CD4-positive, alpha-beta T cell (primary cell): ENCODE measurements at regions of chr1 and their contacts with region 1.

Region 1: GRCh38 chr1:99849744-99850458 is at the start of gene AGL:
- DNase-seq: peak; percentile 76 to 93 (median 83)
- ATAC-seq: peak; percentile 97
- H3K4me3 ChIP-seq: peak within 1 kb of the TSS; percentile 95
- H3K4me3 Mint-ChIP-seq: peak within 1 kb of the TSS; percentile 95
- H3K27ac ChIP-seq: peak within 1 kb of the TSS; percentile 64 to 65
- H3K27ac Mint-ChIP-seq: peak within 1 kb of the TSS; percentile 88
- H3K4me1 ChIP-seq: peaks cover 14% of the 10 kb centered on the region
- H3K4me1 Mint-ChIP-seq: peaks cover 42% of the 10 kb centered on the region
- H3K27me3 ChIP-seq: no peaks in the 10 kb centered on the region
- H3K27me3 Mint-ChIP-seq: no peaks in the 10 kb centered on the region
- CTCF ChIP-seq: no peak
- total RNA-seq, gene AGL: 8.6 to 9.6 TPM

Region 2: GRCh38 chr1:99969729-99970621 is 120.1 kb after region 1 on chr1 and contains the start of gene SLC35A3:
- CTCF ChIA-PET with region 1: no interaction called
- POLR2A ChIA-PET with region 1: interaction called, 4 read pairs
- intact Hi-C with region 1: loop called in 1 of 2 experiments (anchors 5 kb)
- DNase-seq: peak; percentile 60 to 88 (median 72)
- ATAC-seq: peak; percentile 83
- H3K4me3 ChIP-seq: peak within 1 kb of the TSS; percentile 80
- H3K4me3 Mint-ChIP-seq: peak within 1 kb of the TSS; percentile 100
- H3K27ac ChIP-seq: peak within 1 kb of the TSS; percentile 24 to 71
- H3K27ac Mint-ChIP-seq: peak within 1 kb of the TSS; percentile 97
- H3K4me1 ChIP-seq: peaks cover 11% of the 10 kb centered on the region
- H3K4me1 Mint-ChIP-seq: peaks cover 38% of the 10 kb centered on the region
- H3K27me3 ChIP-seq: no peaks in the 10 kb centered on the region
- H3K27me3 Mint-ChIP-seq: no peaks in the 10 kb centered on the region
- CTCF ChIP-seq: no peak
- total RNA-seq, gene SLC35A3: 20.2 to 24.6 TPM

Region 3: GRCh38 chr1:99980928-99981327 is 131.0 kb after region 1 on chr1:
- CTCF ChIA-PET with region 1: no interaction called
- POLR2A ChIA-PET with region 1: no interaction called
- intact Hi-C with region 1: no loop called
- DNase-seq: no peak
- ATAC-seq: no peak
- H3K4me3 ChIP-seq: no peak overlapping the region
- H3K4me3 Mint-ChIP-seq: no peak overlapping the region
- H3K27ac ChIP-seq: no peak overlapping the region
- H3K27ac Mint-ChIP-seq: no peak overlapping the region
- H3K4me1 ChIP-seq: no peaks in the 10 kb centered on the region
- H3K4me1 Mint-ChIP-seq: peaks cover 36% of the 10 kb centered on the region
- H3K27me3 ChIP-seq: no peaks in the 10 kb centered on the region
- H3K27me3 Mint-ChIP-seq: no peaks in the 10 kb centered on the region
- CTCF ChIP-seq: no peak

Region 4: GRCh38 chr1:100883963-100884362 is 1034.1 kb after region 1 on chr1:
- CTCF ChIA-PET with region 1: interaction called, 4 read pairs
- POLR2A ChIA-PET with region 1: no interaction called
- intact Hi-C with region 1: loop called in 1 of 2 experiments (anchors 5 kb)
- DNase-seq: no peak
- ATAC-seq: no peak
- H3K4me3 ChIP-seq: no peak overlapping the region
- H3K4me3 Mint-ChIP-seq: no peak overlapping the region
- H3K27ac ChIP-seq: no peak overlapping the region
- H3K27ac Mint-ChIP-seq: no peak overlapping the region
- H3K4me1 ChIP-seq: no peaks in the 10 kb centered on the region
- H3K4me1 Mint-ChIP-seq: no peaks in the 10 kb centered on the region
- H3K27me3 ChIP-seq: no peaks in the 10 kb centered on the region
- H3K27me3 Mint-ChIP-seq: no peaks in the 10 kb centered on the region
- CTCF ChIP-seq: no peak